Activated CD4-positive, alpha-beta memory T cell treated with anti-CD3 and anti-CD28 coated beads for 36 hours (primary cell): ENCODE measurements at regions of chr3 and their contacts with region 1.

Region 1: GRCh38 chr3:138567401-138567800 is 26.7 kb downstream of the CEP70 start:
- DNase-seq: no peak
- H3K4me3 Mint-ChIP-seq: no peak overlapping the region
- H3K27ac Mint-ChIP-seq: no peak overlapping the region
- H3K4me1 Mint-ChIP-seq: peaks cover 8% of the 10 kb centered on the region
- H3K27me3 Mint-ChIP-seq: no peaks in the 10 kb centered on the region

Region 2: DNA sequence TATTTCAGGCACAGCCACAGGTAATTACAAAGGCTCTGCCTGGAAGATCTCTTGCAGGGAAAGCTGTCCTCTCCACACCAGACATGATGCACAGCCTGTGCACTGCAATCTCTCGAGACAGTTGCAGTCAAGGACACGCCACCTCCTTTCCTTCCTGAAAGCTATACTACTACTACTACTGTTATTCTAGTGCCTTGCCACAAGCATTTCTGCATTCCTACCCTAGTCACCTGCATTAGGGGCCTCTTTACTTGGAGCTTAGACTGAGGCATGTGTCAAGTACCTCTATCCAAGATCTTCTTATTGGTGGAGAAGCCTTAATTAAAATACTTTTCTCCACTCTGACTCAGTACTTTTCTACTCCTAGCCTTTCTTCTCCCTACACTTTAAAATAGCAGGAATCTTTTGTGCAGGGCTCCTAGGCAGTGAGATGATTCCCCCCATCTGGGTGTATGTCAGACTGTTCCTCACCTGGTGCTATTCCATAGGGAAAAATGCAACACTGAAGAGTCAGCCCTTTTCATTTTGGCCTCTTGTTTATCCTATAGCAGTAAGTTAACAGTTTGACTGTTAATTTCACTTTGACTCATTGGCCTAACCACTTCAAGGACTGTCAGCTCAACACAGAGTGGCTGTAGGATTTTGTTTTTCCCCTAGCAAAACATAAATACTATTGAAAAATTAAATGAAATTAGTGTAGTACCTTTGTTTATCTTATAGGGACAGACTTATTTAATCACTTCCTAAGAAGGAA is 54.1 kb before region 1 on chr3:
- CTCF ChIA-PET with region 1: no interaction called
- POLR2A ChIA-PET with region 1: no interaction called
- intact Hi-C with region 1: loop called (anchors 1 kb)
- DNase-seq: no peak
- H3K4me3 Mint-ChIP-seq: no peak overlapping the region
- H3K27ac Mint-ChIP-seq: no peak overlapping the region
- H3K4me1 Mint-ChIP-seq: peaks cover 7% of the 10 kb centered on the region
- H3K27me3 Mint-ChIP-seq: no peaks in the 10 kb centered on the region